Activated B cell treated with CpG ODN at 0.5 μM for 24 hours (primary cell): ENCODE measurements at regions of chr15 and their contacts with region 1.

Region 1: GRCh38 chr15:67542420-67543347 is at the start of gene MAP2K5:
- DNase-seq: peak; percentile 76
- ATAC-seq: peak; percentile 73
- H3K4me3 Mint-ChIP-seq: peak within 1 kb of the TSS; percentile 94
- H3K27ac Mint-ChIP-seq: peak within 1 kb of the TSS; percentile 94
- H3K4me1 Mint-ChIP-seq: peaks cover 56% of the 10 kb centered on the region
- H3K27me3 Mint-ChIP-seq: peaks cover 5% of the 10 kb centered on the region
- CTCF ChIP-seq: no peak
- total RNA-seq, gene MAP2K5: 18.9 and 26.7 TPM in 2 replicates

Region 2: GRCh38 chr15:67456677-67457529 is 85.8 kb before region 1 on chr15:
- CTCF ChIA-PET with region 1: no interaction called
- POLR2A ChIA-PET with region 1: no interaction called
- intact Hi-C with region 1: loop called (anchors 1 kb)
- DNase-seq: peak; percentile 70
- ATAC-seq: peak; percentile 97
- H3K4me3 Mint-ChIP-seq: no peak overlapping the region
- H3K27ac Mint-ChIP-seq: no peak overlapping the region
- H3K4me1 Mint-ChIP-seq: no peaks in the 10 kb centered on the region
- H3K27me3 Mint-ChIP-seq: peaks cover 4% of the 10 kb centered on the region
- CTCF ChIP-seq: peak; percentile 85

Region 3: DNA sequence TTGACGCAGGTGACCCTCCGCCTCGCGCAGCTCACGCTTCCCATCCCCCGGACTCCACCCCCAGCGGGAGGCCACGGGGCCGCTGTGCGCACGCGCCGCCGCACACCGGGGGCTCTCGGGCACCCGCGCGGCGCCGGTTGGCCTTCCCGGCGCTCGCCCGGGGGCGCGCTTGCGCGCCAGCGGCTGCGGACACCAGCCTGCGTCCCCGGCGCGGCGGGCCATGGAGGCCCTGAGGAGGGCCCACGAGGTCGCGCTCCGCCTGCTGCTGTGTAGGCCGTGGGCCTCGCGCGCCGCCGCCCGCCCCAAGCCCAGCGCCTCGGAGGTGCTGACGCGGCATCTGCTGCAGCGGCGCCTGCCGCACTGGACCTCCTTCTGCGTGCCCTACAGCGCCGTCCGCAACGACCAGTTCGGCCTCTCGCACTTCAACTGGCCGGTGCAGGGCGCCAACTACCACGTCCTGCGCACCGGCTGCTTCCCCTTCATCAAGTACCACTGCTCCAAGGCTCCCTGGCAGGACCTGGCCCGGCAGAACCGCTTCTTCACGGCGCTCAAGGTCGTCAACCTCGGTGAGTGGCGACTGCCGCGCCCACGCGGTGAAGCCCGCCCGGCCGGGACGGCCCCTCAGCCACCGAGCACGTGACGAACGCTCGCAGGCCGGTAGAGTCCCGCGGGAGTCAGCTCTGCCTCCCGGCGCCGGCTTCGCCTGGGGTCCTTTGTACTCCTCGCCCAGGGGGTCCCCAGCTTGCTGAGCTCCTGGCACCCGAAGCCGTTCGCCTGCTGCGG is 21.5 kb before region 1 on chr15 and contains the start of gene C15orf61:
- CTCF ChIA-PET with region 1: no interaction called
- POLR2A ChIA-PET with region 1: interaction called, 32 read pairs
- intact Hi-C with region 1: loop called (anchors 1 kb)
- DNase-seq: peak; percentile 88
- ATAC-seq: peak; percentile 81
- H3K4me3 Mint-ChIP-seq: peak within 1 kb of the TSS; percentile 93
- H3K27ac Mint-ChIP-seq: peak within 1 kb of the TSS; percentile 92
- H3K4me1 Mint-ChIP-seq: peaks cover 22% of the 10 kb centered on the region
- H3K27me3 Mint-ChIP-seq: no peaks in the 10 kb centered on the region
- CTCF ChIP-seq: no peak
- total RNA-seq, gene C15orf61: 3.3 and 4.2 TPM in 2 replicates

Region 4: GRCh38 chr15:67558502-67558901 is 15.8 kb after region 1 on chr15:
- CTCF ChIA-PET with region 1: no interaction called
- POLR2A ChIA-PET with region 1: no interaction called
- intact Hi-C with region 1: no loop called
- DNase-seq: no peak
- ATAC-seq: no peak
- H3K4me3 Mint-ChIP-seq: no peak overlapping the region
- H3K27ac Mint-ChIP-seq: no peak overlapping the region
- H3K4me1 Mint-ChIP-seq: peaks cover 16% of the 10 kb centered on the region
- H3K27me3 Mint-ChIP-seq: no peaks in the 10 kb centered on the region
- CTCF ChIP-seq: no peak

Region 5: GRCh38 chr15:67741308-67741707 is 198.6 kb after region 1 on chr15:
- CTCF ChIA-PET with region 1: no interaction called
- POLR2A ChIA-PET with region 1: no interaction called
- intact Hi-C with region 1: no loop called
- DNase-seq: no peak
- ATAC-seq: no peak
- H3K4me3 Mint-ChIP-seq: no peak overlapping the region
- H3K27ac Mint-ChIP-seq: no peak overlapping the region
- H3K4me1 Mint-ChIP-seq: peaks cover 5% of the 10 kb centered on the region
- H3K27me3 Mint-ChIP-seq: no peaks in the 10 kb centered on the region
- CTCF ChIP-seq: no peak